ENCODE measurements at regions of chr17 and their contacts with region 1.

Region 1: DNA sequence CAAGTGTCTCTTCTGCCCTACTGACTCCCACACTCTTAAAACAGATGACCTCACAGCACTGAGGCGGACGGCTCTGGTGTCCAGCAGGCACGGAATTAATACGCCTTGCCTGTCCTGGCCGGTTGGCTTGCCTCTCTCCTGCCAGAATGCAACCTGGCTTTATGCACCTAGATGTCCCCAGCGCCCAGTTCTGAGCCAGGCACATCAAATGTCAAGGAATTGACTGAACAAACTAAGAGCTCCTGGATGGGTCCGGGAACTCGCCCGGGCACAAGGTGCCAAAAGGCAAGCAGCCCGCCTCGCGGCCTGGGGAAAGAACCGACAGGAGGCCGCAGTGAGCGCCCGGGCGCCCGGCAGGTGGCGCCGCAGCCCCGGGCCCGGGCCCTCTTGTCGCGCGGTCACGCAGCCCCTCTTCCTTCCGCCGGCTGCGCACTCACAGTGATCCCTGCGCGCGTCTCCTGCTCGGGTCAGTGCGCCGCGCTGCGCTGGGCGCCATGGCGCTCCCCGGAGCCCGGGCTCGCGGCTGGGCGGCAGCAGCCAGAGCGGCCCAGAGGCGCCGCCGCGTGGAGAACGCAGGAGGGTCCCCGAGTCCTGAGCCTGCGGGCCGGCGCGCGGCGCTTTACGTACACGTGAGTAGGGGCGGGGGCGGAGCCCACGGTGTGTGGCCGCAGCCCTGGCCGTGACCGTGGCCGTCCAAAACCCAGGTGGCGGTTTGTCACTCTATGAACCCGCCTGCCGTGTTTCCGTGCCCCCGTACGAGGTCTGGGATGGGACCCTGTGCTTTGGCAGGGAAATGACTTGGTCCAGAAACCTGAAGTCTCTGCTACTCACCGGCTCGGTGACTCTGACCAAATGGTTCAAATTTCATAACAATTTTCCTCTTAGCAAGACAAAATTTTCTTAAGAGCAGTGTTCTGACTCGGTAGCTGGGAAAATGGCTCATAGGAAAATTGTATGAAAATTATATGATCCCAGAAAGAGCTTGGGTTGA is at the start of gene RSAD1:
- DNase-seq: peak; percentile 68 to 94 (median 83)
- ATAC-seq: peak; percentile 90
- H3K4me3 ChIP-seq: peak within 1 kb of the TSS; percentile 71 to 88
- H3K4me3 Mint-ChIP-seq: peak within 1 kb of the TSS; percentile 90
- H3K27ac ChIP-seq: peak within 1 kb of the TSS; percentile 56 to 85
- H3K27ac Mint-ChIP-seq: peak within 1 kb of the TSS; percentile 90
- H3K4me1 ChIP-seq: peaks cover 20% of the 10 kb centered on the region
- H3K4me1 Mint-ChIP-seq: peaks cover 22% of the 10 kb centered on the region
- H3K27me3 ChIP-seq: no peaks in the 10 kb centered on the region
- H3K27me3 Mint-ChIP-seq: peaks cover 3% of the 10 kb centered on the region
- CTCF ChIP-seq: peak; percentile 80
- total RNA-seq, gene RSAD1: 46.4 to 46.9 TPM

Region 2: GRCh38 chr17:49822829-49823228 is 655.9 kb before region 1 on chr17:
- CTCF ChIA-PET with region 1: no interaction called
- POLR2A ChIA-PET with region 1: no interaction called
- intact Hi-C with region 1: no loop called
- DNase-seq: no peak
- ATAC-seq: no peak
- H3K4me3 ChIP-seq: no peak overlapping the region
- H3K4me3 Mint-ChIP-seq: no peak overlapping the region
- H3K27ac ChIP-seq: no peak overlapping the region
- H3K27ac Mint-ChIP-seq: peak overlapping the region; percentile 37
- H3K4me1 ChIP-seq: peaks cover 42% of the 10 kb centered on the region
- H3K4me1 Mint-ChIP-seq: peaks cover 44% of the 10 kb centered on the region
- H3K27me3 ChIP-seq: no peaks in the 10 kb centered on the region
- H3K27me3 Mint-ChIP-seq: no peaks in the 10 kb centered on the region
- CTCF ChIP-seq: no peak

Region 3: DNA sequence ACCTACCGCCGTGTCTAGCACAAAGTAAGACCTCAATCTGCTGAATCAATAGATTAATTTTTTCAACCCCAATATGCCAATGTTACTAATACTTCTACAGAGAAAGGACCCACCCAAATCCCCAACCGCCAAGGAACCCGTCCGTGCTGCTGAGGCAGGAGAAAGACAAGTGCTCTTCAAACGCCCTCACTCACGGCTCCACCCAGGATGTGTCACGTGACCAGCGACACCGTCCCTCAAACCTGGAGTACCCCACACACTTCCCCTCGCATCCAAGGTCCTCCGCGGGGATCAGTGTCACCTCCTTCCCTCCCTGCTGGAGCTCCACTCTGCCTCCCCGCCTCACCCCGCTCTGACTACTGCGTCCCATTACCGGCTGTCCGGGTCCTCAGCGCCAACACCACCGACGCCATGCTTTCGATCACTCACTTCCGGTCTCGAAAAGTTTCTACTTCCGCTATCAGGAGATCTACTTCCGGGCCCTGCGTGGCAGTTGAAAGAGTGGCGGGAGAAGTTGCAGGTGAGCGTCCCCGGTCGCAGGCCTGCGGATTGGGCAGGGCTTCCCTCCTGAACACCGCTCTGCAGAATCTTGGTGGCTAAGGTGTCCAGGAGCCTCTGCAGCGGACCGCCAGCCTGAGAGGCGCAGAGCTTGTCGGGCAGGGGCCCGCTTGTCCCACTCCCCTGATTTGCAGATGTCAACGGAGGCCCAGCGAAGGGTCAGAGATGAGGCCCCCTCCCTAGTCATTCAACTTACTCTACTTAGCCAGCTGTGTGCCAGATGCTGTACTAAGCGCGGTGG is 105.7 kb before region 1 on chr17 and contains the starts of genes EME1 and MRPL27:
- CTCF ChIA-PET with region 1: interaction called, 3 read pairs
- POLR2A ChIA-PET with region 1: no interaction called
- intact Hi-C with region 1: loop called in 1 of 2 experiments (anchors 1 kb)
- DNase-seq: peak; percentile 73 to 93 (median 87)
- ATAC-seq: peak; percentile 91
- H3K4me3 ChIP-seq: peak within 1 kb of the TSS; percentile 93 to 98
- H3K4me3 Mint-ChIP-seq: peak within 1 kb of the TSS; percentile 97
- H3K27ac ChIP-seq: peak within 1 kb of the TSS; percentile 98 to 99
- H3K27ac Mint-ChIP-seq: peak within 1 kb of the TSS; percentile 99
- H3K4me1 ChIP-seq: peaks cover 20% of the 10 kb centered on the region
- H3K4me1 Mint-ChIP-seq: peaks cover 28% of the 10 kb centered on the region
- H3K27me3 ChIP-seq: no peaks in the 10 kb centered on the region
- H3K27me3 Mint-ChIP-seq: no peaks in the 10 kb centered on the region
- CTCF ChIP-seq: no peak
- total RNA-seq, gene EME1: 0.53 to 0.60 TPM
- total RNA-seq, gene MRPL27: 28.6 to 30.8 TPM

Region 4: GRCh38 chr17:50443368-50443971 is 35.2 kb before region 1 on chr17:
- CTCF ChIA-PET with region 1: no interaction called
- POLR2A ChIA-PET with region 1: no interaction called
- intact Hi-C with region 1: no loop called
- DNase-seq: no peak
- ATAC-seq: no peak
- H3K4me3 ChIP-seq: no peak overlapping the region
- H3K4me3 Mint-ChIP-seq: no peak overlapping the region
- H3K27ac ChIP-seq: no peak overlapping the region
- H3K27ac Mint-ChIP-seq: no peak overlapping the region
- H3K4me1 ChIP-seq: no peaks in the 10 kb centered on the region
- H3K4me1 Mint-ChIP-seq: peaks cover 1% of the 10 kb centered on the region
- H3K27me3 ChIP-seq: no peaks in the 10 kb centered on the region
- H3K27me3 Mint-ChIP-seq: no peaks in the 10 kb centered on the region
- CTCF ChIP-seq: no peak

Region 5: GRCh38 chr17:50468409-50469207 is 10.1 kb before region 1 on chr17 and contains the start of gene CHAD:
- CTCF ChIA-PET with region 1: interaction called, 13 read pairs
- POLR2A ChIA-PET with region 1: interaction called, 4 read pairs
- intact Hi-C with region 1: no loop called
- DNase-seq: no peak
- ATAC-seq: peak; percentile 55
- H3K4me3 ChIP-seq: peak within 1 kb of the TSS; percentile 4 to 12
- H3K4me3 Mint-ChIP-seq: peak within 1 kb of the TSS; percentile 54
- H3K27ac ChIP-seq: no peak within 1 kb of the TSS
- H3K27ac Mint-ChIP-seq: no peak within 1 kb of the TSS
- H3K4me1 ChIP-seq: peaks cover 11% of the 10 kb centered on the region
- H3K4me1 Mint-ChIP-seq: peaks cover 9% of the 10 kb centered on the region
- H3K27me3 ChIP-seq: peaks cover 10 to 16% of the 10 kb centered on the region in 2 experiments
- H3K27me3 Mint-ChIP-seq: peaks cover 24% of the 10 kb centered on the region
- CTCF ChIP-seq: no peak
- total RNA-seq, gene CHAD: not detected

Region 6: DNA sequence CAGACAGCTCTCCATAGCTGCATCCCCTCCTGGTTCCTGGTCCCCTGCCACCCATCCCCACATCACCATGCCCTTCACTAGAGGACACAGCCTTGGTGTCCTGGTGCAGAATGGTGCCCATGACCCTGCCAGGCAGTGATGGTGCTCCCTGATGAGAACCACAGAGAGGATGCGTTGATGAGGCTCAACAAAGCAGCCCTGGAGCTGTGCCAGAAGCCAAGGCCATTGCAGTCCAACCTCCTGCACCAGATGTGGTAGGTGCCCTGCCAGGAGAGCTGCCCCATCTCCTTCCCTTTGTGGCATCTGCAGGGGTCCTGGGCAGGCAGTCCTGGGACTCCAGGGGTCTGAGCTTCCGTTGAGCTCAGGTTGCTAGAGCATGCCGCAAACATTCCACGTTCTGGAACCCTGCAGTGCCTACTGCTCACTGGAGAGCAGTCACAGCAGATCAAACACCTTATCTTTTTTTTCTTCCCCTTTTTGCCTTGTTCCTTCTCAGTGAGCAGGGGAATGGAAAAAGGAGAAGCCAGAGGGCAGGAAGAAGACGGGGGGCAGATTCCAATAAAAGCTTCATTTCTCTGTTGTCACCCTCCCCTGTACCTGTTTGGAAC is 48.6 kb after region 1 on chr17:
- CTCF ChIA-PET with region 1: no interaction called
- POLR2A ChIA-PET with region 1: no interaction called
- intact Hi-C with region 1: no loop called
- DNase-seq: no peak
- ATAC-seq: no peak
- H3K4me3 ChIP-seq: no peak overlapping the region
- H3K4me3 Mint-ChIP-seq: no peak overlapping the region
- H3K27ac ChIP-seq: no peak overlapping the region
- H3K27ac Mint-ChIP-seq: no peak overlapping the region
- H3K4me1 ChIP-seq: peaks cover 3% of the 10 kb centered on the region
- H3K4me1 Mint-ChIP-seq: no peaks in the 10 kb centered on the region
- H3K27me3 ChIP-seq: peaks cover 9 to 23% of the 10 kb centered on the region in 2 experiments
- H3K27me3 Mint-ChIP-seq: peaks cover 32% of the 10 kb centered on the region
- CTCF ChIP-seq: no peak

Region 7: DNA sequence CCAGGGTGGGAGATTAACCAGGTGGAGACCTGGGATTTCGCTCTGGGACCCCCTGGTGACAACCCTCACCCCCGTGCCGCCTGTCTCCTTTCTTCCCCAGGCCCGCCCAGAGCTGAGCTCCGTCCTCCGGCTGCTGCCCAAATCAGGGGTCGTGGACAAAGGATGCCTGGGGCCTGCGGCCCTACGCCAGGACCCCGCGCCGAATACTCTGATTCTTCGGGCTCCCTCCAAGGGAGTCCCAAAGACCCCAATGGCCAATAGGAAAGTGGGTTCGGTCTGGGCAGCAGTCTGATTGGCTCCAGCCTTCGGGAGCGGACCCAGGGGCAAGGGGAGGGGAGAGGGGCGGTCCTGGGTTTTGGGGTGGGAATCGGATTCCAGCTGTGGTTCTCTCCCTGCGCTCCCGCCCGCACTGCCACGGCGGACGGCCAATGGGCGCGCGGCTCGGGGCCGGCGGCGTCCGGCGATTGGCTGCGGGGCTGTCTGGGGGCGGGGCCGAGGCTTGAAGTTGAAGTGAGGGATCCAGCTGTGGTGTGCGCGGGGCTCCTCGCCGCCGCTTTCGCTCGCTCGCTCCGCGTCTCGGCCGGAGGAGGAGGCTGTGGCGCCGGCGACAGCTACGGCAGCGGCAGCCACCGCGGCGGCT is 81.6 kb after region 1 on chr17 and contains the start of gene CACNA1G:
- CTCF ChIA-PET with region 1: interaction called, 3 read pairs
- POLR2A ChIA-PET with region 1: no interaction called
- intact Hi-C with region 1: loop called in 1 of 2 experiments (anchors 5 kb)
- DNase-seq: peak; percentile 74 to 91 (median 85)
- ATAC-seq: peak; percentile 84
- H3K4me3 ChIP-seq: peak within 1 kb of the TSS; percentile 47 to 54
- H3K4me3 Mint-ChIP-seq: peak within 1 kb of the TSS; percentile 78
- H3K27ac ChIP-seq: no peak within 1 kb of the TSS
- H3K27ac Mint-ChIP-seq: no peak within 1 kb of the TSS
- H3K4me1 ChIP-seq: peaks cover 29% of the 10 kb centered on the region
- H3K4me1 Mint-ChIP-seq: peaks cover 32% of the 10 kb centered on the region
- H3K27me3 ChIP-seq: peaks cover 29 to 41% of the 10 kb centered on the region in 2 experiments
- H3K27me3 Mint-ChIP-seq: peaks cover 48% of the 10 kb centered on the region
- CTCF ChIP-seq: no peak
- total RNA-seq, gene CACNA1G: 0.03 TPM in 1 of 2 experiments, not detected in the other

Region 8: DNA sequence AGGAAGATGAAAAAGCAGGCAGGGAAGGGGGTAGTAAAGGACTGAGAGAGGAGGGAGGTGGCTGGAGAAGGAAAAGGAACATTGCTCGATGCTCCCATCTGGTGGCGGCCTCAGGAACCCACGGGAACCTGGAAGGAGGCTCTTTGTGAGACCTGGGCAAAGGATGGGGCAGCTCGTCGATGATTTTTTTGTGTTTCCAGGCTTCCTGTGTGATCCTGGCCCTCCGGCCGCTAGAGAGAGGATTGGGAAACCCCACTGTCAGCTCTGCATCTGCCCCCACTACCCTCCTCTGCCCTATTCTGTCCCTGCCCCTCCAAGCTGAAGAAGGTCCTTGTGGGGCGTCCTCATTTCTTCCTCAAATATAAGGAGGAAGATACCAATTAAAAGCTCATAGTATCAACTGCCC is 363.3 kb after region 1 on chr17:
- CTCF ChIA-PET with region 1: no interaction called
- POLR2A ChIA-PET with region 1: no interaction called
- intact Hi-C with region 1: loop called in 1 of 2 experiments (anchors 5 kb)
- DNase-seq: peak in 8 of 9 experiments; percentile 21 to 67 (median 51)
- ATAC-seq: peak; percentile 69
- H3K4me3 ChIP-seq: no peak overlapping the region
- H3K4me3 Mint-ChIP-seq: no peak overlapping the region
- H3K27ac ChIP-seq: no peak overlapping the region
- H3K27ac Mint-ChIP-seq: no peak overlapping the region
- H3K4me1 ChIP-seq: no peaks in the 10 kb centered on the region
- H3K4me1 Mint-ChIP-seq: no peaks in the 10 kb centered on the region
- H3K27me3 ChIP-seq: no peaks in the 10 kb centered on the region
- H3K27me3 Mint-ChIP-seq: no peaks in the 10 kb centered on the region
- CTCF ChIP-seq: peak; percentile 62

Measured in CD8-positive, alpha-beta T cell (primary cell).